Naive thymus-derived CD4-positive, alpha-beta T cell (primary cell): ENCODE measurements at regions of chr2 and their contacts with region 1.

Region 1: GRCh38 chr2:201231781-201232466 is 28.4 kb upstream of the CASP8 start:
- DNase-seq: peak; percentile 75 to 95 (median 91)
- ATAC-seq: peak; percentile 79
- H3K4me3 ChIP-seq: peak overlapping the region; percentile 70
- H3K4me3 Mint-ChIP-seq: peak overlapping the region; percentile 66 to 99 (median 96)
- H3K27ac ChIP-seq: no peak overlapping the region
- H3K27ac Mint-ChIP-seq: peak overlapping the region; percentile 85 to 98 (median 95)
- H3K4me1 ChIP-seq: peaks cover 27 to 32% of the 10 kb centered on the region in 2 donors
- H3K4me1 Mint-ChIP-seq: peaks cover 28 to 77% (median 67%) of the 10 kb centered on the region in 7 donors
- H3K27me3 ChIP-seq: no peaks in the 10 kb centered on the region
- H3K27me3 Mint-ChIP-seq: no peaks in the 10 kb centered on the region

Region 2: DNA sequence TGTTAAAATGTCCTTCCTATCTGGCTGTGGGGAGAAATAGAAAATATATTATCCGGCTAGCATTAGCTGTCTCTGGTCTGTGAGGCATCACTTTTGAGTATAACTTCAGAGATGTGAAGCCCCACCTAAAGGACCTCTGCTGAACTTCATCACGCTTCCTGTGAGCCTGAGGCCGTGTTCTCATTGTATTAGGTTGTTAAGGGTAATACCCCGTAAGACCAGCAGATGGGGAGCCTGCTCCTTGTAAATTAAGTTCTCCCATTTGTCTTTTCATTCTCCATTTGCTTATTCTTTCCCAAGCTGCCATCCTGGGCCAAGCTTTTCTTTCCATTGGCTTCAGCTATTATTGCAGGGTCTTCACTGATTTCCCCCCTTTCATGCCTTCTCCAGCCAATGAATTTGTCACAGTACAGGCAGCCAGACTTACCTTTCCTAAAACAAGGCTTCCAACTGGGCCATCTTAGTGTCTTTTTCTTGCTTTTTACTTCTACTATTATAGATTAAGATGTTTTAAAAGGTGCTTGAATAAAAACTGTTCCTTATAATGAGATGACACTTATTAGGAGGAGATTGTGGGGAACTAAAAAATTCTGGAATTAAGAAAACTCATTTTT is 330.4 kb before region 1 on chr2:
- CTCF ChIA-PET with region 1: interaction called, 12 read pairs
- POLR2A ChIA-PET with region 1: no interaction called
- intact Hi-C with region 1: loop called (anchors 1 kb)
- DNase-seq: peak; percentile 18 to 83 (median 76)
- ATAC-seq: peak; percentile 100
- H3K4me3 ChIP-seq: no peak overlapping the region
- H3K4me3 Mint-ChIP-seq: no peak overlapping the region
- H3K27ac ChIP-seq: no peak overlapping the region
- H3K27ac Mint-ChIP-seq: peak overlapping the region; percentile 4 to 86 (median 44)
- H3K4me1 ChIP-seq: no peaks in the 10 kb centered on the region
- H3K4me1 Mint-ChIP-seq: peaks cover 0 to 27% (median 6%) of the 10 kb centered on the region in 7 donors
- H3K27me3 ChIP-seq: no peaks in the 10 kb centered on the region
- H3K27me3 Mint-ChIP-seq: no peaks in the 10 kb centered on the region

Region 3: GRCh38 chr2:201182650-201183364 is 49.1 kb before region 1 on chr2 and contains the start of gene CASP10:
- CTCF ChIA-PET with region 1: interaction called, 140 read pairs
- POLR2A ChIA-PET with region 1: interaction called, 90 read pairs
- intact Hi-C with region 1: loop called (anchors 1 kb)
- DNase-seq: peak in 7 of 9 donors; percentile 67 to 83 (median 77)
- ATAC-seq: peak; percentile 90
- H3K4me3 ChIP-seq: peak within 1 kb of the TSS; percentile 68
- H3K4me3 Mint-ChIP-seq: peak within 1 kb of the TSS; percentile 87 to 99 (median 95)
- H3K27ac ChIP-seq: peak within 1 kb of the TSS; percentile 89
- H3K27ac Mint-ChIP-seq: peak within 1 kb of the TSS; percentile 86 to 98 (median 95)
- H3K4me1 ChIP-seq: peaks cover 22 to 24% of the 10 kb centered on the region in 2 donors
- H3K4me1 Mint-ChIP-seq: peaks cover 26 to 46% (median 29%) of the 10 kb centered on the region in 7 donors
- H3K27me3 ChIP-seq: no peaks in the 10 kb centered on the region
- H3K27me3 Mint-ChIP-seq: no peaks in the 10 kb centered on the region
- total RNA-seq, gene CASP10: 29.0 to 49.8 (median 42.9) TPM

Region 4: GRCh38 chr2:201257956-201258665 is 26.2 kb after region 1 on chr2:
- CTCF ChIA-PET with region 1: interaction called, 64 read pairs
- POLR2A ChIA-PET with region 1: interaction called, 77 read pairs
- intact Hi-C with region 1: loop called (anchors 1 kb)
- DNase-seq: peak; percentile 72 to 99 (median 98)
- ATAC-seq: peak; percentile 84
- H3K4me3 ChIP-seq: peak overlapping the region; percentile 80
- H3K4me3 Mint-ChIP-seq: peak overlapping the region; percentile 85 to 100 (median 94)
- H3K27ac ChIP-seq: peak overlapping the region; percentile 91
- H3K27ac Mint-ChIP-seq: peak overlapping the region; percentile 95 to 99 (median 98)
- H3K4me1 ChIP-seq: peaks cover 63 to 71% of the 10 kb centered on the region in 2 donors
- H3K4me1 Mint-ChIP-seq: peaks cover 44 to 91% (median 75%) of the 10 kb centered on the region in 7 donors
- H3K27me3 ChIP-seq: no peaks in the 10 kb centered on the region
- H3K27me3 Mint-ChIP-seq: no peaks in the 10 kb centered on the region

Region 5: GRCh38 chr2:201642579-201643215 is 410.8 kb after region 1 on chr2:
- CTCF ChIA-PET with region 1: no interaction called
- POLR2A ChIA-PET with region 1: interaction called, 3 read pairs
- intact Hi-C with region 1: loop called (anchors 1 to 2 kb)
- DNase-seq: peak; percentile 81 to 94 (median 92)
- ATAC-seq: peak; percentile 94
- H3K4me3 ChIP-seq: peak overlapping the region; percentile 95
- H3K4me3 Mint-ChIP-seq: peak overlapping the region; percentile 86 to 99 (median 96)
- H3K27ac ChIP-seq: peak overlapping the region; percentile 87
- H3K27ac Mint-ChIP-seq: peak overlapping the region; percentile 76 to 100 (median 97)
- H3K4me1 ChIP-seq: peaks cover 3 to 5% of the 10 kb centered on the region in 2 donors
- H3K4me1 Mint-ChIP-seq: peaks cover 5 to 21% (median 12%) of the 10 kb centered on the region in 7 donors
- H3K27me3 ChIP-seq: no peaks in the 10 kb centered on the region
- H3K27me3 Mint-ChIP-seq: peaks cover 0 to 4% (median 0%) of the 10 kb centered on the region in 5 donors

Region 6: GRCh38 chr2:201839727-201840126 is 607.8 kb after region 1 on chr2:
- CTCF ChIA-PET with region 1: no interaction called
- POLR2A ChIA-PET with region 1: no interaction called
- intact Hi-C with region 1: no loop called
- DNase-seq: no peak
- ATAC-seq: no peak
- H3K4me3 ChIP-seq: no peak overlapping the region
- H3K4me3 Mint-ChIP-seq: no peak overlapping the region
- H3K27ac ChIP-seq: no peak overlapping the region
- H3K27ac Mint-ChIP-seq: no peak overlapping the region
- H3K4me1 ChIP-seq: no peaks in the 10 kb centered on the region
- H3K4me1 Mint-ChIP-seq: no peaks in the 10 kb centered on the region
- H3K27me3 ChIP-seq: no peaks in the 10 kb centered on the region
- H3K27me3 Mint-ChIP-seq: peaks cover 6 to 19% (median 12%) of the 10 kb centered on the region in 5 donors

Region 7: DNA sequence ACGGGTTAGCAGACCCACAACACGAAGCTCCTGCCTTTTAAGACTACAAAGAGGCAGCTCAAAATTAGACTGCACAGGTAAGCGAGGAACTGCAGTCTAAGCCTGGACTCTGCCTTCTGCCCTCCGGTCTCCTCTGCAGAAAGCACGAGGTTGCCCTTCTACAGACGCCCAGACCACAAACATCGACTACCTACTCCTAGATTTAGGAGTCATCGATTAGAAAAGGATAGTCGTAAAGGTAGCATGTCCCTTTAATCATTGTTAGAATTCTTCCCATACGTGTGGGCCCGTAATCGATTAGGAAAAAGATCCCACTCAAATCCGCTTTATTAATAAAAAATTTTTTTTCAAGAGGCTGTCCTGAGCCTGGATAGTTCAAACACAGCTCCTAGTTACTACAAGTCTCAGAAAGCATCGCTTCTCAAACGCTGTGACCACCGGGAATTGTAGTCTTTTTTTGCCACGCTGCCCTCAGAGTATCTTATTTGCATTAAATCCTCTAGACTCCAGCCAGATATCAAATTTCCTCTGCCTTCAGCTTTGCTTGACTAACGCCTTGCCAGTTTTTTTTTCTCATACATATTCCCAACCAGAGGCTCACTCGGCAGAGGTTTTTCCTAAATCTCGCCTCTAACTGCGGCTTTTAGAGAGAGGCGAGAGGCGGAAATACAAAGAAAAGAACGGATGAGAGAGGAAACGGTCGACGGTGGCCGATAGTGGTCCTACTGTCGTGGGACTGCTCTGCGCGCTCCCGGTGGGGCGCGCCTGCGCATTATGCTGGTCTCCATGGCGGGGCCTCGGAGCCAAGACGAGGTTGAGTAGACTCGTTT is 1679.8 kb after region 1 on chr2 and contains the starts of genes CARF and WDR12:
- CTCF ChIA-PET with region 1: no interaction called
- POLR2A ChIA-PET with region 1: no interaction called
- intact Hi-C with region 1: loop called in 1 of 2 experiments (anchors 10 kb)
- DNase-seq: peak; percentile 81 to 93 (median 89)
- ATAC-seq: peak; percentile 93
- H3K4me3 ChIP-seq: peak within 1 kb of the TSS; percentile 82
- H3K4me3 Mint-ChIP-seq: peak within 1 kb of the TSS; percentile 90 to 100 (median 98)
- H3K27ac ChIP-seq: peak within 1 kb of the TSS; percentile 79
- H3K27ac Mint-ChIP-seq: peak within 1 kb of the TSS; percentile 93 to 99 (median 97)
- H3K4me1 ChIP-seq: peaks cover 4 to 11% of the 10 kb centered on the region in 2 donors
- H3K4me1 Mint-ChIP-seq: peaks cover 24 to 50% (median 34%) of the 10 kb centered on the region in 7 donors
- H3K27me3 ChIP-seq: no peaks in the 10 kb centered on the region
- H3K27me3 Mint-ChIP-seq: no peaks in the 10 kb centered on the region
- total RNA-seq, gene CARF: 10.2 to 31.2 (median 15.4) TPM
- total RNA-seq, gene WDR12: 17.2 to 50.4 (median 20.8) TPM